ENCODE measurements at regions of chr5 and their contacts with region 1.

Region 1: GRCh38 chr5:132410451-132411381 is 41.2 kb downstream of the SLC22A5 start:
- DNase-seq: peak; percentile 88
- ATAC-seq: peak; percentile 80
- H3K4me3 Mint-ChIP-seq: peak overlapping the region; percentile 100
- H3K27ac Mint-ChIP-seq: peak overlapping the region; percentile 100
- H3K4me1 Mint-ChIP-seq: peaks cover 59% of the 10 kb centered on the region
- H3K27me3 Mint-ChIP-seq: no peaks in the 10 kb centered on the region

Region 2: DNA sequence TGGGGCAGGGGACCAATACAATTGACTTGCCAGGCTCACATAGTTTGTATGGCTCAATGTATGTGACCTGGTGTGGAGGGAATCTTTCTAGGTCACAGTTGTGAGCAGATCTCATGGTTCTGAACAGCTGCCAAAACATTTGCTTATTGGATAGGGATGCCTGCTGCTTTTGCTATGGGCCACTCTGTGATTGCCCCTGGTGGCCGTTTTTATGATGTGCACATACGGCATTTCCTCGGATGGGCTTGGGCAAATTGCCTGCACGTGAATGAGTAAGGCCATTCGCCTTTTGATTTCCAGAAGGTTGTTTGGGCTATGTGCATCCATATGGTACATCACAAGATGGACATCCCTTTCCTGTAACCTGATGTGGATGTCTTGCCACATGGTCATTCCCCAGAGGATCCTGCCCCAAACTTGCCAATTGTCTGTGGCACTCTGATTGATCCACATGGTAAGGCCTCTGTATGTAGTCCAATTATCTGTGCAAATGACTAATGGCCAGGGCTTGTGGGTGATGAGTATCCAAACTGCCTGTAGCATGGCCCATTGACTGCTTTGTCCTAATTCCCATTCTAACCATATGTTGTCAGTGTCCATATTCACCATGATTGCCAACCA is 127.2 kb before region 1 on chr5:
- POLR2A ChIA-PET with region 1: no interaction called
- DNase-seq: no peak
- ATAC-seq: no peak
- H3K4me3 Mint-ChIP-seq: no peak overlapping the region
- H3K27ac Mint-ChIP-seq: no peak overlapping the region
- H3K4me1 Mint-ChIP-seq: no peaks in the 10 kb centered on the region
- H3K27me3 Mint-ChIP-seq: peaks cover 13% of the 10 kb centered on the region

Region 3: DNA sequence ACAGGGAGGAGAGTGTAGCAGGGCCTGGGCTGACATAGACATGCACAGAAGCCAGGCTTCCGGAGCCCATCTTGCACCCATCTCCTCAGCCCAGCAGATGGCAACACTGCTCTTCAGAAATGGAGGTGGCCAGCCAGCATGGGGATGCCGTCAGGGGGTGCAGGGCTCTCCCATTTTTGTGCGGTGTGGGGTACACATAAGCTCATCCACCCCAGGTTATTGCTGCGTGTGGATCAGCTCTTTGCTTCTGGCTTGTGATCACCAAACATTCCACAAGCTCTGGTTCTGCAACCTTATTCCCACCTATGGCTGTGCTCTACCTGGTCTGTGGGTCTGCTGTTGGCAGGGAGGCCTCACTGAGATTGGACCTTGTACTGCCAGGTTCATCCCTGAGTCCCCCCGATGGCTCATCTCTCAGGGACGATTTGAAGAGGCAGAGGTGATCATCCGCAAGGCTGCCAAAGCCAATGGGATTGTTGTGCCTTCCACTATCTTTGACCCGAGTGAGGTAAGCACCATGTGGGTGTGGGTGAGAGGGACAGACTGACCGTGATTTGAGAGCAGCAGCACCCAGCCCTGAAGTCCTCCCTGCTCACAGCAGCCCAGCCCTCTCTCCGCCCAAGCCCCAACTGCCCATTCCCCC is 24.0 kb before region 1 on chr5:
- POLR2A ChIA-PET with region 1: interaction called, 45 read pairs
- DNase-seq: peak; percentile 79
- ATAC-seq: peak; percentile 90
- H3K4me3 Mint-ChIP-seq: peak overlapping the region; percentile 12
- H3K27ac Mint-ChIP-seq: peak overlapping the region; percentile 69
- H3K4me1 Mint-ChIP-seq: peaks cover 40% of the 10 kb centered on the region
- H3K27me3 Mint-ChIP-seq: no peaks in the 10 kb centered on the region

Region 4: DNA sequence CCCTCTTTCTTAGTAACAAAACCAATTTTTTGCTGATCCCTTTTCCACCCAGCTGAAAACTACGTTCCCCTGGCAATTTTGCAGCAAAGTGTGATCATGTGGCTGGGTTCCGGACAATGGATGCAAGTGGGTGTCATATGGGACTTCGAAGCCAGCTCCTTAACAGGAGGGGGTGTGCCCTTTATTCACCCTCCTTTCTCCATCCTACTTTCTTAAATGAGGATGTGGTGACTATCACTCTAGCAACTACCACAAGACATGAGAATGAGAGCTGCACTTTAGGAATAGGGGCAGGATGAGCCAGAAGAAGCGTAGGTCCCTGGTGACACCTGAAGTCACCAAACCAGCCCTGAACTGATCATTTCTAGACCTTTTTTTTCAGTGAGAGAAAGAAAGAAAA is 20.9 kb after region 1 on chr5:
- POLR2A ChIA-PET with region 1: interaction called, 70 read pairs
- DNase-seq: no peak
- ATAC-seq: no peak
- H3K4me3 Mint-ChIP-seq: peak overlapping the region; percentile 23
- H3K27ac Mint-ChIP-seq: peak overlapping the region; percentile 72
- H3K4me1 Mint-ChIP-seq: peaks cover 78% of the 10 kb centered on the region
- H3K27me3 Mint-ChIP-seq: no peaks in the 10 kb centered on the region

Region 5: DNA sequence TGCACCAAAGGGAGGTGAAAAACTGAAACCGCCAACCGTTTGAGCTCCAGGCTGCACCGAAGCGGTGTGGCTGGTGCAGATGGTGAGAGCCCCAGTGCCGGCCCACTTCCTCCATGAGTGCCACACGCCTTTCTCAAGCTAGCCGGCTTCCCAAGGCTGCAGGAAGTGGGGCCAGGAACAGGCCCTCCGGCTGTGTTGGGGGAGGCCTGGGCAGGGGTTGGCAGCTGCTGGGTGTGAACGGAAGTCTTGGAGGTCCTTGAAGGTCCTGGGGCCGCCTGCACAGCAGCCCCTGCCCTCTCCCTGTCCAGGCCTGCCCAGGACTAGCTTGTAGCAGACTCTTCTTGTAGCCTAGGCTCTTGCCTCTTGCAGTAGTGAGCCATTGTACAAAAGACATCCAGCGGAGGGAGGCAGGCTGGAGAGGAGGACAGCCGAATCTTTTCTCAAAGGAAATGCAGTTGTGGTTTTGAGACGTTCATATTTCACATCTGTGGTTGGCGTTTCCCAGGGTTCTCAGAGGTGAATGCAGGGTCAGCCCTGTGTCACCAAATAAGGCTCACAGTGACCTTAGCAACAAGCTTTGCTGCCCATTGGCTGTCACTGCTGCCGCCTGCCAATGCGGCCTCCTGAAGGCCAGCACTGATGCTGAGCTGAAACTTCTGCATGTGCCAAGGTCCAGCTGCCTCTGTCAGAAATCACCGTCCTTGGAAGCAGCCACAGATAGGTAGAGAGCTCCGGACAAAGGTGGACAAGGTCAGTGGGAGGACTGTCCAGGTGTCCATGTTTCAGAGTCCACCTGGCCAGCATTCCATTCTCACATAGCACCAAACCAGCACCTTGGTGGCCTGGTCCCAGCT is 55.9 kb after region 1 on chr5:
- POLR2A ChIA-PET with region 1: interaction called, 31 read pairs
- DNase-seq: peak; percentile 79
- ATAC-seq: peak; percentile 80
- H3K4me3 Mint-ChIP-seq: peak overlapping the region; percentile 81
- H3K27ac Mint-ChIP-seq: peak overlapping the region; percentile 85
- H3K4me1 Mint-ChIP-seq: peaks cover 85% of the 10 kb centered on the region
- H3K27me3 Mint-ChIP-seq: no peaks in the 10 kb centered on the region

Region 6: DNA sequence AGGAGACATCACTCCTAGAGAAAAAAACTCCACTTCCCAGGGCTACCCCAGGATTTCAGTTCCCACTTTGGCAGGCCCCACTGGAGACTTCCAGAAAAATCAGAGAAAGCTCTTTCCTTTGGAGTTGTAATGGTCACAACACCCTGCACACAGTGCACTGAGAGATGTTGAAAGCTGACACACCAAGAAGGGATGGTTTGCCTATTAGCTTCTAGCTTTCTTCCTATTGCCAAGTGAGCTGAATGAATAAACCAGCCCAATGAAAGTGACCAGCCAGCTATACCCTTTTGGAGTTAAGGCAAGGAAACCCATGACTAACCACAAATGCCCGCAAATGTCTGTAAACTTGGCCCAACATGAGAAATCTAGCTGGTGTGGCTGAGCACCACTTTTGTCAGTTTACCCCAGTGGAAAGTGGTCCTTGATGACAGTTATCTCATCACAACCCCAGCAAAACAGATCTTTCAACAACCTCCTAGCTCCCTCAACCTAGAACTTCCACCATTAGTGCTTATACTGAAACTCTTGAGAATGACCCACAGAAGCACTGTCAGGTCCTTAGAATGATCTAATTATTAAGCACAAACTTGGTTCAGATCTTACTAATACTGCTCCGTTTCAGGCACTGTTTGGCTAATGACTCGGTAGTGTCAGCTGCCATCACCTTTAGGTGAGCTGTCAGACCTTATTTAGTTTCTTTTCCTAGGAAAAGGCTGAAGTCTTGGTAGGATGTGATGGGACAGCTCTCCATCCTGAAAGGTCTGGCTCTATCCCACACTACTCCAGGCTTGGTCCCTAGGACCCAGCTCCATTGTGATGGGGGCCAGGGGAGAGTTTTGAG is 68.6 kb after region 1 on chr5:
- POLR2A ChIA-PET with region 1: interaction called, 28 read pairs
- DNase-seq: peak; percentile 34
- ATAC-seq: peak; percentile 1
- H3K4me3 Mint-ChIP-seq: no peak overlapping the region
- H3K27ac Mint-ChIP-seq: peak overlapping the region; percentile 37
- H3K4me1 Mint-ChIP-seq: peaks cover 60% of the 10 kb centered on the region
- H3K27me3 Mint-ChIP-seq: no peaks in the 10 kb centered on the region

Region 7: GRCh38 chr5:132495667-132496190 is 85.0 kb after region 1 on chr5:
- POLR2A ChIA-PET with region 1: interaction called, 135 read pairs
- DNase-seq: peak; percentile 82
- ATAC-seq: peak; percentile 57
- H3K4me3 Mint-ChIP-seq: peak overlapping the region; percentile 87
- H3K27ac Mint-ChIP-seq: peak overlapping the region; percentile 99
- H3K4me1 Mint-ChIP-seq: peaks cover 61% of the 10 kb centered on the region
- H3K27me3 Mint-ChIP-seq: no peaks in the 10 kb centered on the region

Measured in activated naive CD8-positive, alpha-beta T cell treated with anti-CD3 and anti-CD28 coated beads, Interleukin-2, amount 10 ng/mL, durations not matched to agents 7 days and 5 days (primary cell).